Heart left ventricle (tissue), 16 donors: ENCODE measurements at regions of chr17 and their contacts with region 1.

Region 1: GRCh38 chr17:4986951-4987766 is at the start of gene CAMTA2:
- DNase-seq: peak; percentile 93 to 95 (median 94)
- ATAC-seq: peak; percentile 91 to 97 (median 97)
- H3K4me3 ChIP-seq: peak within 1 kb of the TSS; percentile 49 to 95 (median 76)
- H3K27ac ChIP-seq: peak within 1 kb of the TSS; percentile 77 to 97 (median 93)
- H3K4me1 ChIP-seq: peaks cover 0 to 32% (median 23%) of the 10 kb centered on the region in 12 donors
- H3K27me3 ChIP-seq: no peaks in the 10 kb centered on the region
- CTCF ChIP-seq: peak; percentile 63 to 94 (median 80)
- POLR2A ChIP-seq: peak in 1 of 2 donors; percentile 90
- total RNA-seq, gene CAMTA2: 25.2 to 108 (median 32.4) TPM

Region 2: DNA sequence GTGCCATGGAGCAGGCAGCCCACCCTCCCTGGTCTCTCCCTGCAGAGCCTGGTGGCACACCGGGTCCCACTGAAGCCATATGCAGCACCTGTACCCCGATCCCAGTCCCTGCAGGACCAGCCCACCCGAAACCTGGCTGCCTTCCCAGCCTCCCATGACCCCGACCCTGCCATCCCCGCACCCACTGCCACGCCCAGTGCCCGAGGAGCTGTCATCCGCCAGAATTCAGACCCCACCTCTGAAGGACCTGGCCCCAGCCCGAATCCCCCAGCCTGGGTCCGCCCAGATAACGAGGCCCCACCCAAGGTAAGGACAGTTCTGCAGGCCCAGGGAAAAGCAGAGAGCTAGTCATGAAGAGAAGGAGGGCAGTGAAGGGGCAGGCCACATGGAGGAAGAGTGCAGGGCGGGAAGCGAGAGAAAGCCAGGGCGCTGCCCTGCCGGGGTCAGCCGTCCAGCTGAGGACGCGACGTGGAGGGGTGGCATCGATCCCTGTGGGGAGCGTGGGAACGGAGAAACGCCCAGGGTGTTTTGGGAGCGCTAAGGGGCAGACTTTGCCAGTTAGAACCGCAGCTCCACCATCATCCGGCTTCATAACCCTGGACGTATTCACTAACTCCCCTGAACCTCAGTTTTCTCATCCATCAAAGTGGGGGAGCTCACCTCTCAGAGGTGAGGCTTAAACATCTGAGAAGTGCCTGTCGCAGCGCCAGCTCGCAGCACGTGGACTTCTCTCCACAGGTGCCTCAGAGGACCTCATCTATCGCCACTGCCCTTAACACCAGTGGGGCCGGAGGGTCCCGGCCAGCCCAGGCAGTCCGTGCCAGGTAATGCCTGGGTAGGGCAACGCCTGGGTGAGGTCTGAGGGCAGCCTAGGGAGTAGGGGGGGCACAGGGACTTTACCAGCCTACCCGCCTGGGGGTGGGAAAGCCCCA is 95.5 kb before region 1 on chr17:
- intact Hi-C with region 1: no loop called
- DNase-seq: peak in 2 of 5 donors; percentile 25 to 66
- ATAC-seq: no peak
- H3K4me3 ChIP-seq: no peak overlapping the region
- H3K27ac ChIP-seq: no peak overlapping the region
- H3K4me1 ChIP-seq: no peaks in the 10 kb centered on the region
- H3K27me3 ChIP-seq: no peaks in the 10 kb centered on the region
- CTCF ChIP-seq: no peak
- POLR2A ChIP-seq: no peak

Region 3: GRCh38 chr17:4908301-4908700 is 78.9 kb before region 1 on chr17:
- intact Hi-C with region 1: loop called in 9 of 10 experiments (anchors 1 to 5 kb)
- DNase-seq: no peak
- ATAC-seq: peak in 2 of 4 donors; percentile 41 to 48
- H3K4me3 ChIP-seq: no peak overlapping the region
- H3K27ac ChIP-seq: peak overlapping the region in 9 of 12 donors; percentile 1 to 75 (median 60)
- H3K4me1 ChIP-seq: peaks cover 0 to 20% (median 10%) of the 10 kb centered on the region in 12 donors
- H3K27me3 ChIP-seq: no peaks in the 10 kb centered on the region
- CTCF ChIP-seq: no peak
- POLR2A ChIP-seq: no peak

Region 4: GRCh38 chr17:4939796-4940624 is 47.1 kb before region 1 on chr17 and contains the starts of genes RNF167 and SLC25A11:
- intact Hi-C with region 1: loop called in 4 of 10 experiments (anchors 5 to 10 kb)
- DNase-seq: peak; percentile 94 to 97 (median 95)
- ATAC-seq: peak; percentile 91 to 95 (median 94)
- H3K4me3 ChIP-seq: peak within 1 kb of the TSS; percentile 76 to 98 (median 88)
- H3K27ac ChIP-seq: peak within 1 kb of the TSS; percentile 91 to 100 (median 97)
- H3K4me1 ChIP-seq: peaks cover 11 to 57% (median 33%) of the 10 kb centered on the region in 12 donors
- H3K27me3 ChIP-seq: no peaks in the 10 kb centered on the region
- CTCF ChIP-seq: peak in 2 of 12 donors; percentile 6 to 10
- POLR2A ChIP-seq: peak in 1 of 2 donors; percentile 86
- total RNA-seq, gene RNF167: 50.7 to 111 (median 79.6) TPM
- total RNA-seq, gene SLC25A11: 146 to 282 (median 204) TPM

Region 5: DNA sequence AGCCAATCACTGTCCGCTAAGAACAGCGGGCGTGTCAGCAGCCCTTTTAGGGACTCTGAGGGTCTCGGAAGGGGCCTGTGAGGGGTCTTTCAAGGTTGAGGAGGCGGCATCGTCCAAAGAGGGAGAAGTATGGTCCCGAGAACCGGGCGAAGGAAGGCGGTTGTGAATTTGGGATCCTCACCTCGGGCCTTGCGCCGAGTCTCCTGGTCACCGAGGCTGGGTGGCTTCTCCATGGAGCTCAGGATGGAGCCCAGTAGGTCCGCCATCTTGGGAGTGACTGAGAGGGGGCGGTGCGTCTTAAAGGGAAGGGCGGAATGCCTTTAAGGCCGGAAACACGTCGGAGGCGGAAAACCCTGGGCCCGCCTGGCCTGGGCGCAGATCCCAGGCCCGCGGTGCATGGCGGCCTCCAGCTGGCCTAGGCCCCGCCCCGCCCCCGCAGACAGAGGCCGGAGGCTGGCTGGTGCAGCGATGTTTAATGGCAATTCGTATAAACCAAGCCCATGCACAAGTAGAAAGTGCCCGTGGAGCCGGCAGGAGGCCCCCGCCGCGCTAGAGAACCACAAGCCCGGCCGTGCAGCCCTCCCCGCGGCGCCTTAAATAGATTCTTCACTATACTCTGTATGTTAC is 19.5 kb before region 1 on chr17 and contains the start of gene SPAG7:
- intact Hi-C with region 1: loop called in 2 of 10 experiments (anchors 1 to 2 kb)
- DNase-seq: peak; percentile 95 to 96 (median 95)
- ATAC-seq: peak; percentile 77 to 88 (median 86)
- H3K4me3 ChIP-seq: peak within 1 kb of the TSS; percentile 35 to 83 (median 70)
- H3K27ac ChIP-seq: peak within 1 kb of the TSS; percentile 89 to 99 (median 96)
- H3K4me1 ChIP-seq: peaks cover 0 to 46% (median 31%) of the 10 kb centered on the region in 12 donors
- H3K27me3 ChIP-seq: no peaks in the 10 kb centered on the region
- CTCF ChIP-seq: peak in 6 of 12 donors; percentile 8 to 25 (median 18)
- POLR2A ChIP-seq: peak in 1 of 2 donors; percentile 68
- total RNA-seq, gene SPAG7: 88.7 to 149 (median 125) TPM

Region 6: GRCh38 chr17:5042157-5043022 is 55.2 kb after region 1 on chr17:
- intact Hi-C with region 1: no loop called
- DNase-seq: no peak
- ATAC-seq: no peak
- H3K4me3 ChIP-seq: peak overlapping the region in 1 of 12 donors; percentile 8
- H3K27ac ChIP-seq: peak overlapping the region in 1 of 12 donors; percentile 49
- H3K4me1 ChIP-seq: no peaks in the 10 kb centered on the region
- H3K27me3 ChIP-seq: no peaks in the 10 kb centered on the region
- CTCF ChIP-seq: no peak
- POLR2A ChIP-seq: no peak